CD4-positive, alpha-beta T cell (primary cell): ENCODE measurements at regions of chr16 and their contacts with region 1.

Region 1: GRCh38 chr16:31142109-31143010 is 6.8 kb upstream of the PRSS8 start:
- DNase-seq: peak; percentile 88 to 100 (median 96)
- ATAC-seq: peak; percentile 86
- H3K4me3 ChIP-seq: peak overlapping the region; percentile 41
- H3K4me3 Mint-ChIP-seq: peak overlapping the region; percentile 84
- H3K27ac ChIP-seq: peak overlapping the region; percentile 29 to 76
- H3K27ac Mint-ChIP-seq: peak overlapping the region; percentile 84
- H3K4me1 ChIP-seq: peaks cover 23% of the 10 kb centered on the region
- H3K4me1 Mint-ChIP-seq: peaks cover 13% of the 10 kb centered on the region
- H3K27me3 ChIP-seq: no peaks in the 10 kb centered on the region
- H3K27me3 Mint-ChIP-seq: peaks cover under 1% of the 10 kb centered on the region
- CTCF ChIP-seq: peak; percentile 79

Region 2: GRCh38 chr16:30557957-30558788 is 584.2 kb before region 1 on chr16 and contains the start of gene ZNF764:
- CTCF ChIA-PET with region 1: no interaction called
- POLR2A ChIA-PET with region 1: no interaction called
- intact Hi-C with region 1: no loop called
- DNase-seq: peak; percentile 90 to 99 (median 95)
- ATAC-seq: peak; percentile 89
- H3K4me3 ChIP-seq: peak within 1 kb of the TSS; percentile 73
- H3K4me3 Mint-ChIP-seq: peak within 1 kb of the TSS; percentile 93
- H3K27ac ChIP-seq: peak within 1 kb of the TSS; percentile 93 to 94
- H3K27ac Mint-ChIP-seq: peak within 1 kb of the TSS; percentile 94
- H3K4me1 ChIP-seq: peaks cover 68% of the 10 kb centered on the region
- H3K4me1 Mint-ChIP-seq: peaks cover 41% of the 10 kb centered on the region
- H3K27me3 ChIP-seq: no peaks in the 10 kb centered on the region
- H3K27me3 Mint-ChIP-seq: no peaks in the 10 kb centered on the region
- CTCF ChIP-seq: no peak
- total RNA-seq, gene ZNF764: 20.4 to 22.9 TPM

Region 3: GRCh38 chr16:30984669-30985400 is 157.5 kb before region 1 on chr16 and contains the start of gene HSD3B7:
- CTCF ChIA-PET with region 1: interaction called, 26 read pairs
- POLR2A ChIA-PET with region 1: interaction called, 5 read pairs
- intact Hi-C with region 1: loop called (anchors 1 kb)
- DNase-seq: peak; percentile 64 to 87 (median 78)
- ATAC-seq: peak; percentile 74
- H3K4me3 ChIP-seq: no peak within 1 kb of the TSS
- H3K4me3 Mint-ChIP-seq: no peak within 1 kb of the TSS
- H3K27ac ChIP-seq: no peak within 1 kb of the TSS
- H3K27ac Mint-ChIP-seq: no peak within 1 kb of the TSS
- H3K4me1 ChIP-seq: peaks cover 13% of the 10 kb centered on the region
- H3K4me1 Mint-ChIP-seq: no peaks in the 10 kb centered on the region
- H3K27me3 ChIP-seq: no peaks in the 10 kb centered on the region
- H3K27me3 Mint-ChIP-seq: no peaks in the 10 kb centered on the region
- CTCF ChIP-seq: peak; percentile 85
- total RNA-seq, gene HSD3B7: 0.11 TPM in 1 of 2 experiments, not detected in the other

Region 4: GRCh38 chr16:31032736-31033708 is 109.3 kb before region 1 on chr16 and contains the start of gene STX4:
- CTCF ChIA-PET with region 1: interaction called, 6 read pairs
- POLR2A ChIA-PET with region 1: interaction called, 9 read pairs
- intact Hi-C with region 1: loop called in 1 of 2 experiments (anchors 2 kb)
- DNase-seq: peak; percentile 93 to 100 (median 96)
- ATAC-seq: peak; percentile 81
- H3K4me3 ChIP-seq: peak within 1 kb of the TSS; percentile 95
- H3K4me3 Mint-ChIP-seq: peak within 1 kb of the TSS; percentile 97
- H3K27ac ChIP-seq: peak within 1 kb of the TSS; percentile 93 to 96
- H3K27ac Mint-ChIP-seq: peak within 1 kb of the TSS; percentile 83
- H3K4me1 ChIP-seq: peaks cover 26% of the 10 kb centered on the region
- H3K4me1 Mint-ChIP-seq: peaks cover 27% of the 10 kb centered on the region
- H3K27me3 ChIP-seq: no peaks in the 10 kb centered on the region
- H3K27me3 Mint-ChIP-seq: no peaks in the 10 kb centered on the region
- CTCF ChIP-seq: no peak
- total RNA-seq, gene STX4: 54.1 to 55.2 TPM

Region 5: DNA sequence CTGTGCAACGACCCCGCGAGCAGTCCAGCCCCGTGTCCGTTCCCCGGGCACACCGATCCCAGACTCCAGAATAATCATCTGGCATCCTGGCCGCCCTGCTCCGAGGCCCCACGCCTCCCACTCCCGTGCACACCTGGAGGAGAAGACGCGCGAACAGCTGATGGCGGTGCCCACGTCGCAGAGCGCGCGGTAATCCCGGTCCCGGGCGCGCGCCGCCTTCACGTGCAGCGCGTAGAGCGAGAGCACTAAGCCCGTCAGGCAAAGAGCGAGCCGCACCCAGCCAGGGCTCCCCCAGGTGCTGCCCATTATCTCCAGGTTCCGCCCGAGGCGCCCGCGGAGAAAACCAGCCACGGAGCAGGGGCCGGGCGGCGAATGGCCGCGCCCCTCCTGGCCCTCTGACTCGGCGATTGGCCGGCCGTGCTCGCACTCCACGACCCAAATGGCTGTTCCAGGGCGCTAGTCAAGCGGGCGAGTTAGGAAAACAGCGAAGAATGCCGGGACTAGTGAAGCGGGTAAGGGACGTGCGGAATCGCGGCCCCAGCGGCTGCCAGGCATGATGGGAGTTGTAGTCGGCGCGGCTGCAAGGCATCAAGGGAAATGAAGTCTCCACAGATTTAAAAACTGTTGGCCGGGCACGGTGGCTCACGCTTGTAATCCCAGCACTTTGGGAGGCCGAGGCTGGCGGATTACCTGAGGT is 47.8 kb before region 1 on chr16 and contains the start of gene VKORC1:
- CTCF ChIA-PET with region 1: interaction called, 13 read pairs
- POLR2A ChIA-PET with region 1: interaction called, 7 read pairs
- intact Hi-C with region 1: loop called in 1 of 2 experiments (anchors 1 kb)
- DNase-seq: peak; percentile 75 to 95 (median 82)
- ATAC-seq: peak; percentile 90
- H3K4me3 ChIP-seq: peak within 1 kb of the TSS; percentile 82
- H3K4me3 Mint-ChIP-seq: peak within 1 kb of the TSS; percentile 93
- H3K27ac ChIP-seq: peak within 1 kb of the TSS; percentile 84
- H3K27ac Mint-ChIP-seq: peak within 1 kb of the TSS; percentile 83
- H3K4me1 ChIP-seq: peaks cover 31% of the 10 kb centered on the region
- H3K4me1 Mint-ChIP-seq: peaks cover 34% of the 10 kb centered on the region
- H3K27me3 ChIP-seq: no peaks in the 10 kb centered on the region
- H3K27me3 Mint-ChIP-seq: no peaks in the 10 kb centered on the region
- CTCF ChIP-seq: no peak
- total RNA-seq, gene VKORC1: 19.0 to 19.2 TPM

Region 6: GRCh38 chr16:31117391-31118197 is 24.8 kb before region 1 on chr16 and contains the start of gene KAT8:
- CTCF ChIA-PET with region 1: interaction called, 32 read pairs
- POLR2A ChIA-PET with region 1: interaction called, 120 read pairs
- intact Hi-C with region 1: loop called in 1 of 2 experiments (anchors 1 kb)
- DNase-seq: peak; percentile 93 to 99 (median 96)
- ATAC-seq: peak; percentile 91
- H3K4me3 ChIP-seq: peak within 1 kb of the TSS; percentile 68
- H3K4me3 Mint-ChIP-seq: peak within 1 kb of the TSS; percentile 88
- H3K27ac ChIP-seq: peak within 1 kb of the TSS; percentile 87 to 95
- H3K27ac Mint-ChIP-seq: peak within 1 kb of the TSS; percentile 83
- H3K4me1 ChIP-seq: peaks cover 23% of the 10 kb centered on the region
- H3K4me1 Mint-ChIP-seq: peaks cover 17% of the 10 kb centered on the region
- H3K27me3 ChIP-seq: no peaks in the 10 kb centered on the region
- H3K27me3 Mint-ChIP-seq: no peaks in the 10 kb centered on the region
- CTCF ChIP-seq: no peak
- total RNA-seq, gene KAT8: 114 to 124 TPM